CD8-positive, alpha-beta memory T cell (primary cell): ENCODE measurements at regions of chr2 and their contacts with region 1.

Region 1: DNA sequence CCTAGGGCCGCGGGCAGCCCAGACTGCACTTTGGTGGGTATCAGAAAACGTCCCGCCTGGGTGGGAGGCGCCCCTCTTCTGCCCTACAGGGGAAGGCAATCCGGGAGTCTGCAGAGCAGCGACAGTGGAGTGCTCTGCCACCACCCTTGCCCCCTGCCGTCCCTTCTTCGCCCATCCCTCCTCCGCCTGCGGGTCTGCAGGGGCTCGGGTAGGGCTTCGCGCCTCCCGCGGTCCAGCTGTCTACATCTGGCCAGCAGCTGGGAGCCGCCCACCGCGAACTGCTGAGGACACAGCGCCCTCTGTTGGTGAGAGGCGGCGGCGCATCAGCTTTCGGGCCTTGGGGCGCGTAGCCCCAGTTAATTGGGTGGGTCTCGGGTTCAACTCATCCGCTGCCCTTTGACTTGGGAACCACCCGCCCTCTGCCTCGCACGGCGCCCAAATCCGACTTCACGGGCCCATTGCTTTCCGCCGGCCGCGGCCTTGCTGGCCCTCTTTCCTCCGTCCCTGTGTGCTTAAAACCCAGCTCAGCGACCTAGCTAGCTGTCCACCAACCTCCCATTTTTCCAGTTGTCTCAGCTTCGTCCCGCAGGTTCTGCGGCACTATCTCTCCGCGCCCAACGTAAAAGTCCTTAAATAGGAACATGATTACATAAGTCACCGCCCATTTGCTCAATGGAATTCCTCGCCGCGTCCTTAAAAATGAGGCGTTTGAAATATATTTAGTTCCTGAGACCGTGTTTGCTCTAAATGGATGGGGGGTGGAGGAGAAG is 17.6 kb downstream of the WNT10A start:
- DNase-seq: peak; percentile 69 to 83 (median 74)
- H3K4me3 ChIP-seq: peak overlapping the region; percentile 58
- H3K4me3 Mint-ChIP-seq: peak overlapping the region; percentile 72 to 92 (median 81)
- H3K27ac ChIP-seq: no peak overlapping the region
- H3K27ac Mint-ChIP-seq: peak overlapping the region; percentile 77 to 97 (median 94)
- H3K4me1 ChIP-seq: peaks cover 54% of the 10 kb centered on the region
- H3K4me1 Mint-ChIP-seq: peaks cover 43 to 50% (median 44%) of the 10 kb centered on the region in 3 donors
- H3K27me3 ChIP-seq: peaks cover 9% of the 10 kb centered on the region
- H3K27me3 Mint-ChIP-seq: peaks cover 25 to 26% of the 10 kb centered on the region in 2 donors

Region 2: GRCh38 chr2:218777276-218777990 is 120.9 kb before region 1 on chr2:
- CTCF ChIA-PET with region 1: no interaction called
- POLR2A ChIA-PET with region 1: no interaction called
- DNase-seq: no peak
- H3K4me3 ChIP-seq: no peak overlapping the region
- H3K4me3 Mint-ChIP-seq: peak overlapping the region in 1 of 7 donors; percentile 10
- H3K27ac ChIP-seq: no peak overlapping the region
- H3K27ac Mint-ChIP-seq: no peak overlapping the region
- H3K4me1 ChIP-seq: no peaks in the 10 kb centered on the region
- H3K4me1 Mint-ChIP-seq: peaks cover 0 to 6% (median 1%) of the 10 kb centered on the region in 3 donors
- H3K27me3 ChIP-seq: peaks cover 6% of the 10 kb centered on the region
- H3K27me3 Mint-ChIP-seq: peaks cover 27 to 40% of the 10 kb centered on the region in 2 donors

Region 3: DNA sequence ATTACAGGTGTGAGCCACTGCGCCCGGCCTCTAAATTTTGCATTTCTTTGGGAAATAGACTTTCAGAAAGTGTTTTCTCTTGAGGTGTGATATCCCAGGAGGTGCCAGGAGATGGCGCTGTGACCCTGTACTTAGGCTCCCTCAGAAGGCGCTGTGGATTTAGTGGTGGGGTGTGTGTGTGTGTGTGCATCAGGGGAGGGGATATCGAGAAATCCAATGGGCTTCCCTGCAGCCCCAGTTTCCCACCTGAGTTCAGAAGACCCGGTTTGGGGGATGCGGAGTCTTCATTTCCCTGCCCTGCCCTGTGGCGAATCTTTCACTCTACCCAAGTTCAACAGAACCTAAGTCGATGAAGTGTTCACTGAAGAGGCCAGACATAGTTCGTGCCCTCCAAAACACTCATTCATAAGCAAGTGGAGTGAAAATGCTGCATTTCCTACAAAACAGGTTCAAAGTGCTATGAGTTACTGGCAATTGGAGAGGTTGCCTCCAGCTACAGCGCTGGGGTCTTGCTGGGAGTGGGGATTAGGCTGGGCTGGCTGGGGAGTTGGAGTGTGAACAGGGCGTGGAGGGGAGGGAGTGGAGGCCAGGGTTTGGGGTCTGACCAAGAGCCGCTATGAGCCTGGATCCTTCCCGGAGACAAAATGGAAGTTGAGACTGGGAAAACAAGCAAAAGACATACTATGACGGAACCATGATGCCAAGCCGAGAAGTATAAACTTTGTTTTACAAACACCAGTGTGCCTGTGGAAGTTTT is 45.2 kb before region 1 on chr2:
- CTCF ChIA-PET with region 1: interaction called, 38 read pairs
- POLR2A ChIA-PET with region 1: no interaction called
- DNase-seq: peak; percentile 46 to 77 (median 54)
- H3K4me3 ChIP-seq: no peak overlapping the region
- H3K4me3 Mint-ChIP-seq: no peak overlapping the region
- H3K27ac ChIP-seq: no peak overlapping the region
- H3K27ac Mint-ChIP-seq: no peak overlapping the region
- H3K4me1 ChIP-seq: no peaks in the 10 kb centered on the region
- H3K4me1 Mint-ChIP-seq: peaks cover 0 to 10% (median 6%) of the 10 kb centered on the region in 3 donors
- H3K27me3 ChIP-seq: peaks cover 20% of the 10 kb centered on the region
- H3K27me3 Mint-ChIP-seq: peaks cover 59 to 65% of the 10 kb centered on the region in 2 donors

Region 4: GRCh38 chr2:218859556-218859987 is 38.7 kb before region 1 on chr2 and contains the start of gene WNT6:
- CTCF ChIA-PET with region 1: interaction called, 28 read pairs
- POLR2A ChIA-PET with region 1: no interaction called
- DNase-seq: no peak
- H3K4me3 ChIP-seq: no peak within 1 kb of the TSS
- H3K4me3 Mint-ChIP-seq: peak within 1 kb of the TSS in 6 of 7 donors; percentile 61 to 80 (median 74)
- H3K27ac ChIP-seq: no peak within 1 kb of the TSS
- H3K27ac Mint-ChIP-seq: peak within 1 kb of the TSS in 2 of 8 donors; percentile 36 to 58
- H3K4me1 ChIP-seq: peaks cover 18% of the 10 kb centered on the region
- H3K4me1 Mint-ChIP-seq: peaks cover 18 to 32% (median 24%) of the 10 kb centered on the region in 3 donors
- H3K27me3 ChIP-seq: peaks cover 39% of the 10 kb centered on the region
- H3K27me3 Mint-ChIP-seq: peaks cover 73 to 84% of the 10 kb centered on the region in 2 donors
- total RNA-seq, gene WNT6: 0.27 to 0.42 TPM

Region 5: GRCh38 chr2:218908721-218909619 is 10.7 kb after region 1 on chr2:
- CTCF ChIA-PET with region 1: interaction called, 54 read pairs
- POLR2A ChIA-PET with region 1: no interaction called
- DNase-seq: peak; percentile 83 to 93 (median 85)
- H3K4me3 ChIP-seq: peak overlapping the region; percentile 94
- H3K4me3 Mint-ChIP-seq: peak overlapping the region; percentile 73 to 93 (median 85)
- H3K27ac ChIP-seq: peak overlapping the region; percentile 38
- H3K27ac Mint-ChIP-seq: peak overlapping the region in 7 of 8 donors; percentile 62 to 92 (median 76)
- H3K4me1 ChIP-seq: peaks cover 14% of the 10 kb centered on the region
- H3K4me1 Mint-ChIP-seq: peaks cover 7 to 16% (median 15%) of the 10 kb centered on the region in 3 donors
- H3K27me3 ChIP-seq: peaks cover 10% of the 10 kb centered on the region
- H3K27me3 Mint-ChIP-seq: peaks cover 10 to 28% of the 10 kb centered on the region in 2 donors